ENCODE measurements at regions of chr16 and their contacts with region 1.

Region 1: GRCh38 chr16:20383106-20384029 is 21.2 kb downstream of the PDILT start:
- DNase-seq: peak in 1 of 2 donors; percentile 16
- ATAC-seq: peak in 3 of 4 donors; percentile 44 to 60 (median 59)
- H3K4me3 ChIP-seq: no peak overlapping the region
- H3K27ac ChIP-seq: no peak overlapping the region
- H3K4me1 ChIP-seq: no peaks in the 10 kb centered on the region
- H3K27me3 ChIP-seq: peaks cover 0 to 4% (median 0%) of the 10 kb centered on the region in 3 donors
- CTCF ChIP-seq: peak; percentile 61

Region 2: GRCh38 chr16:19555162-19555937 is 828.0 kb before region 1 on chr16 and contains the start of gene VPS35L:
- intact Hi-C with region 1: loop called in 1 of 2 experiments (anchors 5 kb)
- DNase-seq: peak; percentile 99 to 100
- ATAC-seq: peak; percentile 97 to 99 (median 98)
- H3K4me3 ChIP-seq: peak within 1 kb of the TSS; percentile 90
- H3K27ac ChIP-seq: peak within 1 kb of the TSS; percentile 93
- H3K4me1 ChIP-seq: peaks cover 5% of the 10 kb centered on the region
- H3K27me3 ChIP-seq: no peaks in the 10 kb centered on the region
- CTCF ChIP-seq: peak; percentile 80
- total RNA-seq, gene VPS35L: 27.8 to 34.6 (median 32.4) TPM

Region 3: DNA sequence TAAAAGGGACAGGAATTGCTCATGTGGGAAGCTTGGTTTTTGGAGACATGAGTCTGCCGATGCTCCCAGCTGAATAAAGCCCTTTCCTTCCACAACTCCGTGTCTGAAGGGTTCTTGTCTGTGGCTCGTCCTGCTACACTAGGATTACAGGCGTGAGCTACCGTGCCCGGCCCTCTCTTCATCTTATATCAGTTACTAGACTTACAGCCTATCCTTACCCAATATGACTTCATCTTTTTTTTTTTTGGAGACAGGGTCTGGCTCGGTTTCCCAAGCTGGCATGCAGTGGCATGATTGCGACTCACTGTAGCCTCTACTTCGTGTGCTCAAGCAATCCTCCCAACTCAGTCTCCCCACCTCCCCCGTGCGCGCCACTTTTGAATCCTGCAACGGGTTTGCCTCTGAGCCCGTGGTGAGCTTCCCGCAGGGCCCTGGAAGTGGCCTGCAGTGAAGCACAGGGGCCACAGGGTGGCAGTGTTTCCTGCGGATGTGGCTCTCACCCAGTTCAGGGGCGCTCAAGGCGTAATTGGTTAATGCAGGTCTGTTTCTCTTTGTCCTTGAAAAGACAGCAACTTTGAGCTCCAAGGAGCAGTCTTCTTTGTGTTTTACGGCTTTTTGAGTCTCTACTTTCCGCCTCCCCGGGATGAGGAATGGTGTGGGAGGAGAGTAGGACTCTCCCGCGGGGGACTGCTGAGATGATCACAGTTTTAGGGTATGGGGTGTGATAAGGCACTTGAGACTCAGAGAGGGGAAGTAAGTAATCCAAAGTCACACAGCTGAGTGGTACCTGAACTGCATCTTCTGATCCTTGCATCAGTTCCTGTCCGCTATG is 476.0 kb before region 1 on chr16:
- intact Hi-C with region 1: loop called (anchors 2 to 5 kb)
- DNase-seq: peak; percentile 49 to 67
- ATAC-seq: peak; percentile 74 to 89 (median 84)
- H3K4me3 ChIP-seq: no peak overlapping the region
- H3K27ac ChIP-seq: no peak overlapping the region
- H3K4me1 ChIP-seq: no peaks in the 10 kb centered on the region
- H3K27me3 ChIP-seq: peaks cover 0 to 18% (median 0%) of the 10 kb centered on the region in 3 donors
- CTCF ChIP-seq: peak; percentile 89